Gastrocnemius medialis (tissue), 4 donors: ENCODE measurements at regions of chr9 and their contacts with region 1.

Region 1: GRCh38 chr9:70413798-70414775 is at the start of gene KLF9:
- DNase-seq: peak; percentile 98 to 99
- ATAC-seq: peak; percentile 57 to 61
- H3K4me3 ChIP-seq: peak within 1 kb of the TSS; percentile 76 to 99 (median 96)
- H3K27ac ChIP-seq: peak within 1 kb of the TSS; percentile 92 to 100 (median 100)
- H3K4me1 ChIP-seq: peaks cover 46 to 52% of the 10 kb centered on the region in 2 donors
- H3K27me3 ChIP-seq: no peaks in the 10 kb centered on the region
- CTCF ChIP-seq: no peak
- POLR2A ChIP-seq: no peak
- total RNA-seq, gene KLF9: 122 to 174 (median 169) TPM

Region 2: GRCh38 chr9:69376651-69377050 is 1037.4 kb before region 1 on chr9:
- in situ Hi-C with region 1: no loop called
- intact Hi-C with region 1: loop called (anchors 5 kb)
- DNase-seq: peak; percentile 42 to 48
- ATAC-seq: peak; percentile 14 to 16
- H3K4me3 ChIP-seq: no peak overlapping the region
- H3K27ac ChIP-seq: peak overlapping the region; percentile 90 to 98 (median 96)
- H3K4me1 ChIP-seq: peaks cover 51 to 56% of the 10 kb centered on the region in 2 donors
- H3K27me3 ChIP-seq: no peaks in the 10 kb centered on the region
- CTCF ChIP-seq: no peak
- POLR2A ChIP-seq: peak in 1 of 2 donors; percentile 31

Region 3: DNA sequence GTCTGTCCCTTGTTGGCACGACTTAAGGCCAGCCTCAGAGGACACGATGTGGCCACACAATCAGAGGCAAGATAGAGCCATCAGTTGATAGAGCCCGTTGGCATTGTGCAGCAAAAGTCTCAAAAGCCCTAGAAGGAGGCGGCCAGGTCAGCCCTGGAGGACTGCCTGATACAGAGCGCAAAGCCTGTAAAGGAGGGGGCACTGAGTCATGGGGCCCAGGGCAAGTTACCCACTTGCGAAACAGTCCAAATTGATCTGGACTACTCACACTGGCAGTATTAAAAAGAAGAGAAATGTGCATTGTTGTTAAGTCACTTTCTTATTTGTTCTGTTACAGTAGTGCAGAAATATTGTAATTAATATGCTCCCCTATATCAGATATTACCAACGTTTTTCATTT is 51.1 kb before region 1 on chr9:
- in situ Hi-C with region 1: no loop called
- intact Hi-C with region 1: no loop called
- DNase-seq: no peak
- ATAC-seq: no peak
- H3K4me3 ChIP-seq: no peak overlapping the region
- H3K27ac ChIP-seq: no peak overlapping the region
- H3K4me1 ChIP-seq: peaks cover 0 to 5% of the 10 kb centered on the region in 2 donors
- H3K27me3 ChIP-seq: no peaks in the 10 kb centered on the region
- CTCF ChIP-seq: no peak
- POLR2A ChIP-seq: no peak

Region 4: GRCh38 chr9:70595211-70595610 is 181.1 kb after region 1 on chr9:
- in situ Hi-C with region 1: loop called in 2 of 4 experiments (anchors 5 to 10 kb)
- intact Hi-C with region 1: no loop called
- DNase-seq: no peak
- ATAC-seq: peak; percentile 32 to 37
- H3K4me3 ChIP-seq: no peak overlapping the region
- H3K27ac ChIP-seq: peak overlapping the region in 3 of 4 donors; percentile 48 to 64 (median 56)
- H3K4me1 ChIP-seq: peaks cover 10 to 15% of the 10 kb centered on the region in 2 donors
- H3K27me3 ChIP-seq: no peaks in the 10 kb centered on the region
- CTCF ChIP-seq: no peak
- POLR2A ChIP-seq: no peak